ENCODE measurements at regions of chr19 and their contacts with region 1.

Region 1: DNA sequence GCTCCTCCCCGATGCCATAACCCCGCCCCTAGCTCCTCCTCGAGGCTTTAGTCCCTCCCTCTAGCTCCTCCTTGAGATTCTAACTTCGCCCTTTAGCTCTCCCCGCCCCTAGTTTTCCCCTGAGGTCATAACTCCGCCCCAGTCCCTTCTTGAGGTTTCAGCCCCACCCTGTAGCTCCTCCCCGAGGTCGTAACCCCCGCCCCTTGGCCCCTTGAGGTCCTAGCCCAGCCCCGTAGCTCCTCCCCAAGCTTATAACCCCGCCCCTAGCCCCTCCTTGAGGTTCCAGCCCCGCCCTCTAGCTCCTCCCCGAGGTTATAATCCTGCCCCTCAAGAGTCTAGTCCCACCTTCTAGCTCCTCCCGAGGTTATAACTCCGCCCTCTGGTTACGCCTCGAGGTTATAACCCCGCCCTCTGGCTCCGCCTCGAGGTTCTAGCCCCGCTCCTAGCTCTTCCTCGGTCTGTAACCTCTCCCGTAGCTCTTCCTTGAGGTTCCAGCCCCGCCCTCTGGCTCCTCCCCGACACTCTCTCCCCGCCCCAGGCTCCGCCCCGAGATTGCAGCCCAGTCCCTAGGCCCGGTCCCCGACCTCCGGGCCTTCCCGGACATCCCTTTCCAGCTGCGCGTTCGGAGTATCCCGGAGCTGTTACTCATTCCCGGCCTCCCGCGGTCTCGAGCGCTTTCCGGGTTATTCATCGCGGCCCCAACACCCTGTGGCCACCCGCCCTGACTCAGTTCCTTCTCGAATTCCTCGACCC is 1.4 kb downstream of the PLAUR start:
- DNase-seq: peak; percentile 97 to 99
- H3K4me3 ChIP-seq: peak overlapping the region; percentile 92
- H3K27ac ChIP-seq: peak overlapping the region; percentile 86
- H3K4me1 ChIP-seq: peaks cover 31% of the 10 kb centered on the region
- H3K27me3 ChIP-seq: no peaks in the 10 kb centered on the region
- CTCF ChIP-seq: no peak

Region 2: GRCh38 chr19:43489310-43489709 is 179.3 kb before region 1 on chr19:
- CTCF ChIA-PET with region 1: no interaction called
- POLR2A ChIA-PET with region 1: no interaction called
- intact Hi-C with region 1: no loop called
- DNase-seq: no peak
- H3K4me3 ChIP-seq: no peak overlapping the region
- H3K27ac ChIP-seq: no peak overlapping the region
- H3K4me1 ChIP-seq: no peaks in the 10 kb centered on the region
- H3K27me3 ChIP-seq: no peaks in the 10 kb centered on the region
- CTCF ChIP-seq: no peak

Region 3: GRCh38 chr19:43687660-43687997 is 19.0 kb after region 1 on chr19:
- CTCF ChIA-PET with region 1: interaction called, 5 read pairs
- POLR2A ChIA-PET with region 1: interaction called, 9 read pairs
- intact Hi-C with region 1: loop called (anchors 2 kb)
- DNase-seq: peak in 1 of 2 experiments; percentile 39
- H3K4me3 ChIP-seq: no peak overlapping the region
- H3K27ac ChIP-seq: peak overlapping the region; percentile 31
- H3K4me1 ChIP-seq: peaks cover 23% of the 10 kb centered on the region
- H3K27me3 ChIP-seq: no peaks in the 10 kb centered on the region
- CTCF ChIP-seq: no peak

Region 4: DNA sequence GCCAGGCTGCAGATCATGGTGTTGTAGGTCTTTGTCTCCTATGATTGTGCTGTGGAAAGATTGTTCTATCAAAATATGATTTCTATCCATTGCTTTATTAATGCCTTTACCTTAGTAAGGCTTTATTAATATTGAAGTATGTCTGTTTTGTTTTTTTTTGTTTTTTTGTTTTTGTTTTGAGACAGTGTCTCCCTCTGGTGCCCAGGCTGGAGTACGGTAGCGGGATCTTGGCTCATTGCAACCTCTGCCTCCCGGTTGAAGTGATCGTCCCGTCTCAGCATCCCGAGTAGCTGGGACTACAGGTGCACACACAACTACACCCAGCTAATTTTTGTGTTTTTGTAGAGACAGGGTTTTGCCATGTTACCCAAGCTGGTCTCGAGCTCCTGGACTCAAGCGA is 55.0 kb after region 1 on chr19:
- CTCF ChIA-PET with region 1: interaction called, 3 read pairs
- POLR2A ChIA-PET with region 1: interaction called, 12 read pairs
- intact Hi-C with region 1: loop called (anchors 1 kb)
- DNase-seq: no peak
- H3K4me3 ChIP-seq: no peak overlapping the region
- H3K27ac ChIP-seq: no peak overlapping the region
- H3K4me1 ChIP-seq: no peaks in the 10 kb centered on the region
- H3K27me3 ChIP-seq: no peaks in the 10 kb centered on the region
- CTCF ChIP-seq: peak; percentile 62

Region 5: GRCh38 chr19:43754503-43755255 is 86.1 kb after region 1 on chr19 and contains the start of gene SMG9:
- CTCF ChIA-PET with region 1: interaction called, 3 read pairs
- POLR2A ChIA-PET with region 1: interaction called, 18 read pairs
- intact Hi-C with region 1: no loop called
- DNase-seq: peak; percentile 84 to 98
- H3K4me3 ChIP-seq: peak within 1 kb of the TSS; percentile 99
- H3K27ac ChIP-seq: peak within 1 kb of the TSS; percentile 92
- H3K4me1 ChIP-seq: peaks cover 62% of the 10 kb centered on the region
- H3K27me3 ChIP-seq: no peaks in the 10 kb centered on the region
- CTCF ChIP-seq: no peak
- total RNA-seq, gene SMG9: 76.8 and 84.1 TPM in 2 replicates

Region 6: DNA sequence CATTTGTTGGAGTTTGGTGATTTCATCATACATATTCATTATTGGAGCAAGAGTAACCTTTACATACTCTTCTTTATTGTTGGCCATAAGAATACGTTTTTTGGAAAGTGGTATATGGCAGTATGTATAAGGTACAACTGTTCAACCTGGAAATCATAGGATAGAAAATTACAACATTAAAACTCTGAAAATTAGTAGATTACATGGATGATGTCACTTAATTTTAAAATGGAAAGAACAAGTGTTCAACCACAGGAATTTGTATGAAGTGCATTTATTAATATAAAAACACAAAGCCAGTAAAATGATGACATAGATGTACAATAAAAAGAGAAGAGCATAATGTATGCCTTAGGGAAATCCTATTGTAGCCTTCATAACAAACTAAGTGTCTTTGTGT is 308.1 kb after region 1 on chr19:
- CTCF ChIA-PET with region 1: no interaction called
- POLR2A ChIA-PET with region 1: no interaction called
- intact Hi-C with region 1: no loop called
- DNase-seq: no peak
- H3K4me3 ChIP-seq: no peak overlapping the region
- H3K27ac ChIP-seq: no peak overlapping the region
- H3K4me1 ChIP-seq: no peaks in the 10 kb centered on the region
- H3K27me3 ChIP-seq: no peaks in the 10 kb centered on the region
- CTCF ChIP-seq: no peak

Region 7: GRCh38 chr19:44207126-44207803 is 538.7 kb after region 1 on chr19:
- CTCF ChIA-PET with region 1: interaction called, 10 read pairs
- POLR2A ChIA-PET with region 1: no interaction called
- intact Hi-C with region 1: no loop called
- DNase-seq: peak; percentile 86 to 90
- H3K4me3 ChIP-seq: peak overlapping the region; percentile 85
- H3K27ac ChIP-seq: no peak overlapping the region
- H3K4me1 ChIP-seq: peaks cover 7% of the 10 kb centered on the region
- H3K27me3 ChIP-seq: no peaks in the 10 kb centered on the region
- CTCF ChIP-seq: no peak

Measured in PC-9 (cell line).